RWPE1 (cell line): ENCODE measurements at regions of chr17 and their contacts with region 1.

Region 1: DNA sequence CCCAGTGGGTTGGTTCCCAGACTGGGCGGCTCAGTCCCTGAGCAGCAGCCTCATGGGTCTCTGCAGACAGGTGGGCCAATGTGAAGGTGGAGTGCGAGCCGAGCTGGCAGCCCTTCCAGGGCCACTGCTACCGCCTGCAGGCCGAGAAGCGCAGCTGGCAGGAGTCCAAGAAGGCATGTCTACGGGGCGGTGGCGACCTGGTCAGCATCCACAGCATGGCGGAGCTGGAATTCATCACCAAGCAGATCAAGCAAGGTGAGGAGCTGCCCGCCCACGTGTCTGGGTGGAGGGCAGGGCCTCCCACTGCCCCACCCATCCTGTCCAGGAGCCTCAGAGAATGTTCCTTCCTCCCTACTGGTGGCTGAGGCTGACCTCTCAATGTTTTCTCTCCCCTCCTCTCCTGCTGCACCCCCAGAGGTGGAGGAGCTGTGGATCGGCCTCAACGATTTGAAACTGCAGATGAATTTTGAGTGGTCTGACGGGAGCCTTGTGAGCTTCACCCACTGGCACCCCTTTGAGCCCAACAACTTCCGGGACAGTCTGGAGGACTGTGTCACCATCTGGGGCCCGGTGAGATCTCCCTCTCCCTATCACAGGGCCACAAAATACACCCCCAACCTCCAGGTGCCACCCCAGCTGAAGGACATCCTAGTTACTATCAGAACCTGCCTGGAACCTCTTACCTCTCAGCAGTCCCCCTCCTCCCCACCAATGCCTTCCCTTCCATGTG is 44.3 kb downstream of the MRC2 start:
- DNase-seq: peak; percentile 82
- H3K27ac ChIP-seq: peak overlapping the region; percentile 91
- CTCF ChIP-seq: no peak; the same call in 1 of the 2 replicates

Region 2: GRCh38 chr17:62597935-62598334 is 73.8 kb before region 1 on chr17:
- CTCF ChIA-PET with region 1: no interaction called
- POLR2A ChIA-PET with region 1: no interaction called
- DNase-seq: no peak
- H3K27ac ChIP-seq: no peak overlapping the region
- CTCF ChIP-seq: no peak

Region 3: GRCh38 chr17:62644487-62645173 is 27.1 kb before region 1 on chr17:
- CTCF ChIA-PET with region 1: no interaction called
- POLR2A ChIA-PET with region 1: no interaction called
- DNase-seq: no peak
- H3K27ac ChIP-seq: no peak overlapping the region
- CTCF ChIP-seq: no peak

Region 4: DNA sequence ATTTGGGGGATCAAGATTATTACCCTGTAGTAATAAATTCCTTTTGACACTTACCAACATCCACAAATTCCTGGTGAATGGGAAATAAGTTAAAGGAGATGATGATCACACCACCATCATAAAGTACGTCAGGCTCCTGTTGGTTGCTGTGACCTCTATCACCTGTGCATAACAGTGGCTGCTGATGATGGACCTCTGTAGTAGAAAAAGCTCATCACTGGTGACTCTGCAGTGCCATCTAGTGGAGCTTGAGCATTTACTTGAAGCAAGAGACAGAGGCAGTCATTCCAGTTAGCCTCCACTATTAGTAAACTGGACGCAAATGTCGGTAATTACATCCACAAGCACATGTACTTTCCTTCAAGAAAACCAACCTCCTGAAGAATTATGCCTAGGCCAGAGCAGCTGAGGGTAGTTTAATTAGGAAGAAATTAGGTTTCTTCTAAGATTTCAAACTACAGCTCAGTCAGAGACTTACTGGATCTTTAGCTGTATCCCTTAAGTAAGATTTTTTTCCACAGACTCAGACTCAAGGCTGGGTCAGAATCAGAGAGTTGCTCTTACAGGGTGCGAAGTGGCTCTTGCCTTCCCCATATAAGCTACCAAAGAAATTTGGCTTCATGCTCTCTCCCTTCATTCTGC is 735.1 kb after region 1 on chr17:
- CTCF ChIA-PET with region 1: interaction called, 16 read pairs
- POLR2A ChIA-PET with region 1: no interaction called
- DNase-seq: peak; percentile 74
- H3K27ac ChIP-seq: no peak overlapping the region
- CTCF ChIP-seq: peak; percentile 87